Upper lobe of right lung (tissue), 1 donor: ENCODE measurements at regions of chr20 and their contacts with region 1.

Region 1: GRCh38 chr20:49132995-49133478 is 55.1 kb downstream of the STAU1 start:
- DNase-seq: no peak
- ATAC-seq: peak; percentile 81
- H3K4me3 ChIP-seq: no peak overlapping the region
- H3K27ac ChIP-seq: no peak overlapping the region
- H3K4me1 ChIP-seq: peaks cover 6% of the 10 kb centered on the region
- H3K27me3 ChIP-seq: no peaks in the 10 kb centered on the region
- CTCF ChIP-seq: peak; percentile 59

Region 2: GRCh38 chr20:49037962-49038387 is 95.1 kb before region 1 on chr20:
- intact Hi-C with region 1: no loop called
- DNase-seq: no peak
- ATAC-seq: peak; percentile 46
- H3K4me3 ChIP-seq: no peak overlapping the region
- H3K27ac ChIP-seq: no peak overlapping the region
- H3K4me1 ChIP-seq: peaks cover 4% of the 10 kb centered on the region
- H3K27me3 ChIP-seq: no peaks in the 10 kb centered on the region
- CTCF ChIP-seq: no peak

Region 3: GRCh38 chr20:49219089-49219923 is 86.3 kb after region 1 on chr20 and contains the start of gene DDX27:
- intact Hi-C with region 1: loop called (anchors 2 kb)
- DNase-seq: peak; percentile 97
- ATAC-seq: peak; percentile 96
- H3K4me3 ChIP-seq: peak within 1 kb of the TSS; percentile 85
- H3K27ac ChIP-seq: peak within 1 kb of the TSS; percentile 89
- H3K4me1 ChIP-seq: peaks cover 20% of the 10 kb centered on the region
- H3K27me3 ChIP-seq: no peaks in the 10 kb centered on the region
- CTCF ChIP-seq: no peak
- total RNA-seq, gene DDX27: 25.9 TPM